GM12878 (cell line): ENCODE measurements at regions of chr22 and their contacts with region 1.

Region 1: GRCh38 chr22:30262917-30263741 is 3.5 kb downstream of the OSM start:
- DNase-seq: no peak
- ATAC-seq: peak; percentile 38
- H3K4me3 ChIP-seq: 0 out of 2 replicates have a peak overlapping the region, but pooled peaks have one; percentile 12
- H3K27ac ChIP-seq: no peak overlapping the region
- H3K4me1 ChIP-seq: peaks cover 20% of the 10 kb centered on the region
- H3K27me3 ChIP-seq: no peaks in the 10 kb centered on the region
- CTCF ChIP-seq: peak; percentile 84 to 97 (median 92)
- EP300 ChIP-seq: no peak
- POLR2A ChIP-seq: no peak
- RAD21 ChIP-seq: peak; percentile 54

Region 2: GRCh38 chr22:30246962-30247376 is 16.2 kb before region 1 on chr22:
- CTCF ChIA-PET with region 1: no interaction called
- POLR2A ChIA-PET with region 1: no interaction called
- RAD21 ChIA-PET with region 1: no interaction called
- SMC1A ChIA-PET with region 1: no interaction called
- in situ Hi-C with region 1: no loop called
- intact Hi-C with region 1: no loop called
- DNase-seq: no peak
- ATAC-seq: no peak
- H3K4me3 ChIP-seq: no peak overlapping the region
- H3K27ac ChIP-seq: no peak overlapping the region
- H3K4me1 ChIP-seq: no peaks in the 10 kb centered on the region
- H3K27me3 ChIP-seq: peaks cover 3 to 4% of the 10 kb centered on the region in 2 experiments; a peak in 2 of 4 replicates
- CTCF ChIP-seq: no peak
- EP300 ChIP-seq: no peak
- POLR2A ChIP-seq: no peak
- RAD21 ChIP-seq: no peak

Region 3: DNA sequence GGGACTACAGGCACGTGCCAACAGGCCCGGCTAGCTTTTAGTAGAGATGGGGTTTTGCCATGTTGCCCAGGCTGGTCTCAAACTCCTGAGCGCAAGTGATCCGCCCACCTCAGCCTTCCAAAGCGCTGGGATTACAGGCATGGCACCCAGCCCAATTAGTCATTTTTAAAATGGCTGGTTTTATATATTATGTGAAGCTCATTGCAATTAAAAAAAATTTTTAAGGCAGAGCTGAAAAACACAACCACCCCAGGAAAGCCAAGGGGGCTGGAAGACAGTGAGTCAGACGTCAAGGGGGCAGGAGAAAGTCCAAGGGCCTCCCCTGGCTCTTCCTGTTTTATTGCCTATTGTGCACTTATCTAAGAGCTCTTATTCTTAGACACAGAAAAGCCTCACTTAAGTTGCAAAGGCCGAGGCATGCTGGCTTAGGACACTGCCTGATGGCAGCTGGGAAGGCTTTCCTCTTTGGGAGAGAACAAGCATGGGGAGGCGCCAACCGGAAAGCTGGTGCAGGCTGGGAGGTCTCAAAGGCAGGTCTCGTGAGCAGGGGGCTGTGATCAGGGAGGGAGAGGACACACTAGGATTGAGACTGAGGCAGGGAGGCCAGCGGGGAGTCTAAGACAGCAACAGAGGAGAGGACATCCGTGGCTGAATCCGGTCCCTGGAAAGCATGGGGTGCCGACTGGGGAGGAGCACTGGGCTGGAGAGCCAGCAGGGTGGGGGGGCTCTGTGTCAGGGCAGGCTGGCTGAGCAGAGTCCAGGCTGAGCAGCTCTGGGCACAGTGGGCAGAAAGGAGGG is 14.6 kb after region 1 on chr22:
- CTCF ChIA-PET with region 1: interaction called, 40 read pairs
- POLR2A ChIA-PET with region 1: no interaction called
- RAD21 ChIA-PET with region 1: interaction called, 3 read pairs
- SMC1A ChIA-PET with region 1: interaction called, 10 read pairs
- in situ Hi-C with region 1: no loop called
- intact Hi-C with region 1: no loop called
- DNase-seq: no peak
- ATAC-seq: no peak
- H3K4me3 ChIP-seq: no peak overlapping the region
- H3K27ac ChIP-seq: no peak overlapping the region
- H3K4me1 ChIP-seq: no peaks in the 10 kb centered on the region
- H3K27me3 ChIP-seq: no peaks in the 10 kb centered on the region; a peak in 1 of 4 replicates
- CTCF ChIP-seq: no peak
- EP300 ChIP-seq: no peak
- POLR2A ChIP-seq: no peak
- RAD21 ChIP-seq: no peak

Region 4: DNA sequence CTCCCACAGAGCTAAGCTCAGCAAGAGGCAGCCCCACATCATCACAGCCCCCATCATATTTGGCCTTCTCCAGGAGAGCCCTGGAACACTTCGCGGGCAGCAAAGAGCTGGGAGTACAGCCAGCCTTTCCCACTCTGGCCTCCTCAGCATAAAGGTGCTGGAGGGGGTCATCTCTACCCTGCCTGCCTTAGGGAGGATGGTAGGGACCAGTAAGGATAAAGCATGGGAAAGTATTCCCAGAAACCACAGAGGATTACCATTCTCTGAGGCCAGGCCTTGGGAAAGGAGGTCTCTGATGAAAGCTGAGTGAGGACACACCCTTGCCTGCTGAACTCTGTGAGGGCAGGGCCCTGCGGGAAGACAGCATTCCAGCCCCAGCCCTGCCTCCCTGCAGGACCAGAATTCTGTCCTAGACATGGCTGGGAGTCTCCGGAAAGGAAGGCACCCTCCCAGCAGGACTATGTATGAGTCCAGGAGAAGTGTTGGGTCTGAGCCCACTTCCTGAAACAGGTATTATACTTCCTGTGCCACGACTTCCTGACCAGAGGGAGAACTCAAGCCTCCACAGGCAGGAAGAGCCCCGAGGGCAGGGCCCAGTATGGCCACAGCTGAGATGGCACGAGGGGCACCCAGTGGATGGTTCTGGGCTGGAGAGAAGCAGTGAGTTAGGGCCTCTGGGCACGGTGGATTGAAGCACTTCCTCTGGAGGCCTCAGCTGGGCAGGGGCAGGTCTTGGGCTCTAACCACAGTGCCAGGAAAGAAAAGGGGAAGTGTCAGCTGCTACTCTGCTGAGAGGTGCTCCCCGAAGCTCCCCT is 39.1 kb after region 1 on chr22:
- CTCF ChIA-PET with region 1: no interaction called
- POLR2A ChIA-PET with region 1: no interaction called
- RAD21 ChIA-PET with region 1: no interaction called
- SMC1A ChIA-PET with region 1: no interaction called
- in situ Hi-C with region 1: no loop called
- intact Hi-C with region 1: no loop called
- DNase-seq: no peak
- ATAC-seq: peak; percentile 5; the same call in 1 of the 3 replicates
- H3K4me3 ChIP-seq: no peak overlapping the region
- H3K27ac ChIP-seq: peak overlapping the region; percentile 29
- H3K4me1 ChIP-seq: peaks cover 52% of the 10 kb centered on the region
- H3K27me3 ChIP-seq: no peaks in the 10 kb centered on the region
- CTCF ChIP-seq: no peak
- EP300 ChIP-seq: no peak
- POLR2A ChIP-seq: no peak
- RAD21 ChIP-seq: no peak

Region 5: GRCh38 chr22:30386960-30387827 is 124.1 kb after region 1 on chr22 and contains the start of gene RNF215:
- CTCF ChIA-PET with region 1: interaction called, 8 read pairs
- POLR2A ChIA-PET with region 1: interaction called, 4 read pairs
- RAD21 ChIA-PET with region 1: interaction called, 9 read pairs
- SMC1A ChIA-PET with region 1: interaction called, 5 read pairs
- in situ Hi-C with region 1: no loop called
- intact Hi-C with region 1: loop called (anchors 2 kb)
- DNase-seq: no peak
- ATAC-seq: peak; percentile 88
- H3K4me3 ChIP-seq: peak within 1 kb of the TSS; percentile 77; the same call in 1 of the 2 replicates
- H3K27ac ChIP-seq: no peak within 1 kb of the TSS; the same call in 1 of the 2 replicates
- H3K4me1 ChIP-seq: peaks cover 15% of the 10 kb centered on the region
- H3K27me3 ChIP-seq: no peaks in the 10 kb centered on the region
- CTCF ChIP-seq: peak; percentile 76 to 86 (median 83)
- EP300 ChIP-seq: no peak
- POLR2A ChIP-seq: no peak; the same call in 1 of the 2 replicates
- RAD21 ChIP-seq: peak; percentile 85
- polyA plus RNA-seq, gene RNF215: 0.31 TPM in 1 of 2 experiments, not detected in the other